ENCODE measurements at regions of chr10 and their contacts with region 1.

Region 1: DNA sequence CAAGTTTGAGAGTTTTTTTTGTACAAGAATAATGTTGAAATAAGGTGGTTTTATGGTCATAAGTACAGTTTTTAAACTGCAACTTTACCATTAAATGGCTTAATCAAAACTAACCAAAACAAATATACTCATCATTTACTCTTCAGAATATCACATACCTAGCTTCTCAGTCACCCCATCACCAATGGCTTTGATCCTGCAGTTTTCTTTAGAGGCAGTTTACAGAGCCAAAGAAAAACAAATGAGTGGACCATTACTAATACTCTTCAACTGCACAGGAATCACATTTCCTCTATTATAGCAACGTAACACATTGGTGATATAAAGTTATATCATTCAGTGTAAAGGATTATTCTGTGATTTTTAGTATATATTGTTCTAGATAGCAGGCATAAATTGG is 576.1 kb upstream of the LRRTM3 start:
- DNase-seq: peak; percentile 99
- ATAC-seq: peak; percentile 84
- H3K4me3 ChIP-seq: peak overlapping the region; percentile 30
- H3K27ac ChIP-seq: peak overlapping the region; percentile 84
- H3K4me1 ChIP-seq: peaks cover 38% of the 10 kb centered on the region
- H3K27me3 ChIP-seq: no peaks in the 10 kb centered on the region
- CTCF ChIP-seq: no peak

Region 2: GRCh38 chr10:64873959-64874358 is 1475.8 kb before region 1 on chr10:
- CTCF ChIA-PET with region 1: no interaction called
- POLR2A ChIA-PET with region 1: no interaction called
- intact Hi-C with region 1: loop called (anchors 5 kb)
- DNase-seq: no peak
- ATAC-seq: peak; percentile 12; the same call in 1 of the 2 replicates
- H3K4me3 ChIP-seq: no peak overlapping the region
- H3K27ac ChIP-seq: peak overlapping the region; percentile 40
- H3K4me1 ChIP-seq: peaks cover 14% of the 10 kb centered on the region; the same call in 1 of the 2 replicates
- H3K27me3 ChIP-seq: no peaks in the 10 kb centered on the region
- CTCF ChIP-seq: no peak

Region 3: GRCh38 chr10:66187053-66187733 is 162.5 kb before region 1 on chr10:
- CTCF ChIA-PET with region 1: no interaction called
- POLR2A ChIA-PET with region 1: no interaction called
- intact Hi-C with region 1: no loop called
- DNase-seq: peak; percentile 26
- ATAC-seq: peak; percentile 11; the same call in 1 of the 2 replicates
- H3K4me3 ChIP-seq: no peak overlapping the region
- H3K27ac ChIP-seq: no peak overlapping the region
- H3K4me1 ChIP-seq: no peaks in the 10 kb centered on the region
- H3K27me3 ChIP-seq: no peaks in the 10 kb centered on the region
- CTCF ChIP-seq: no peak

Region 4: GRCh38 chr10:66307826-66308225 is 41.9 kb before region 1 on chr10:
- CTCF ChIA-PET with region 1: no interaction called
- POLR2A ChIA-PET with region 1: no interaction called
- intact Hi-C with region 1: loop called (anchors 1 kb)
- DNase-seq: peak; percentile 78
- ATAC-seq: peak; percentile 87
- H3K4me3 ChIP-seq: no peak overlapping the region
- H3K27ac ChIP-seq: no peak overlapping the region
- H3K4me1 ChIP-seq: no peaks in the 10 kb centered on the region
- H3K27me3 ChIP-seq: no peaks in the 10 kb centered on the region
- CTCF ChIP-seq: peak; percentile 91

Region 5: DNA sequence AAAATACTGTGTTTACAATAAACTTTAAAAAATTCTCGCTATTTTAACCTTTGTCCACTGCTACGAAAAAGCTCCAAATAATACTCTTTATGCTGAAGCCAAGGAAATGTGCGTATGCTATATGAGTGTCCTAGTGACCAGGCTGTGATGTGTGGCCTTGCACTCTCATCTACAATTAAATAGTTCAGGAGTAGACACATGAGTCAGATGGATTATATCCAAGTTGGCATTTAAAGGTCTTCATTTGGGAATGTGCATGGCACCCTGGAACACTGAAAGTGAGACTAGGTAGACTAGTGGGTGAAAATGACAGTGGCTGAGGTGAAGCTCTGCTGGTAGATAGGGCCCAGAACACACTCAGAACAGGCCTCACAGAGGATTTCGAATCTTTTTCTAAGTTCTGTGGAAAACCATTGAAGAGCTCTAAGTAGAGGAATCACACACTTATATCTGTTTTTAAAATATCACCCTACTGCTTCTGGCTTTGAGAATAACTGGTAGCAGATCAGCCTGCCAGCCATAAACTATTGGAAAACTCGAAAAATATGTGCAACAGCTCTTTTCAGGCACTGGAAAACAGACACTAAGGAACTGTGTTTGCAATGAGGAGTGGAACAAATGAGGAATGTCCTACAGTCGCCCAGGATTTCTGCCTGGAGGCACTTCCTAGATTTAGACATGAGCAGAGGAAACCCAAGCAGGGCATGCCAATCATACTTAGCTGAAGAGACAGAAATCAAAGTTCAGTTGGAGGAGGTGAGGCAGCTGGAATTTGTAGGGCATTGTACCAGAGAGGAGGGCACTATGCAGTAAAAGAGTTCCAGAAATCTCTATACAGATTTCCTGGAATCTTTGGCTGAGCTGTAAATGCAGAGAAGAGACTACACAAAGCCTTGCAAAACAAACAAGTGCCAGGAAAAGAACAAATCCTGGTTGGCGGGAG is 27.7 kb before region 1 on chr10:
- CTCF ChIA-PET with region 1: no interaction called
- POLR2A ChIA-PET with region 1: no interaction called
- intact Hi-C with region 1: loop called (anchors 1 kb)
- DNase-seq: peak; percentile 81
- ATAC-seq: peak; percentile 51
- H3K4me3 ChIP-seq: no peak overlapping the region
- H3K27ac ChIP-seq: no peak overlapping the region
- H3K4me1 ChIP-seq: peaks cover 20% of the 10 kb centered on the region
- H3K27me3 ChIP-seq: no peaks in the 10 kb centered on the region
- CTCF ChIP-seq: no peak

Region 6: GRCh38 chr10:66378117-66378876 is 28.6 kb after region 1 on chr10:
- CTCF ChIA-PET with region 1: no interaction called
- POLR2A ChIA-PET with region 1: interaction called, 3 read pairs
- intact Hi-C with region 1: loop called (anchors 1 kb)
- DNase-seq: peak; percentile 98
- ATAC-seq: peak; percentile 83
- H3K4me3 ChIP-seq: peak overlapping the region; percentile 5; the same call in 1 of the 2 replicates
- H3K27ac ChIP-seq: peak overlapping the region; percentile 9
- H3K4me1 ChIP-seq: peaks cover 28% of the 10 kb centered on the region
- H3K27me3 ChIP-seq: no peaks in the 10 kb centered on the region
- CTCF ChIP-seq: no peak

Region 7: GRCh38 chr10:66513504-66513903 is 163.8 kb after region 1 on chr10:
- CTCF ChIA-PET with region 1: no interaction called
- POLR2A ChIA-PET with region 1: no interaction called
- intact Hi-C with region 1: loop called (anchors 1 kb)
- DNase-seq: no peak
- ATAC-seq: no peak
- H3K4me3 ChIP-seq: no peak overlapping the region
- H3K27ac ChIP-seq: no peak overlapping the region
- H3K4me1 ChIP-seq: peaks cover 20% of the 10 kb centered on the region
- H3K27me3 ChIP-seq: no peaks in the 10 kb centered on the region
- CTCF ChIP-seq: no peak

Region 8: DNA sequence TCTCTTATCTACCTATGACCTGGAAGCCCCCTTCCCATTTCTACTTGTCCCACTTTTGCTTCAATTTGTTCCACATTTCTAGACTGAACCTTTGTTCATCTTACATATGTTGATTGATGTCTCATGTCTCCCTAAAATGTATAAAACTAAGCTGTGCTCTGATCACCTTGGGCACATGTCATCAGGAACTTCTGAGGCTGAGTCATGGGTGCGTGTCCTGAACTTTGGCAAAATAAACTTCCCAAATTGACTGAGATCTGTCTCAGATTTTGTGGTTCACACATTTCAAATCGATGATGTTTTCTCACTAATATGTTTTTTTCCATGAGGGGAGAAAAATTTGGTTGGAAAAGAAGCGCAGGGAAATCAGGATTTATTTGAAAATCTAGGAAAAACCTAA is 169.9 kb after region 1 on chr10:
- CTCF ChIA-PET with region 1: no interaction called
- POLR2A ChIA-PET with region 1: no interaction called
- intact Hi-C with region 1: loop called (anchors 1 kb)
- DNase-seq: peak; percentile 97
- ATAC-seq: peak; percentile 70
- H3K4me3 ChIP-seq: no peak overlapping the region
- H3K27ac ChIP-seq: peak overlapping the region; percentile 29
- H3K4me1 ChIP-seq: peaks cover 24% of the 10 kb centered on the region
- H3K27me3 ChIP-seq: no peaks in the 10 kb centered on the region
- CTCF ChIP-seq: no peak